MCF 10A (cell line): ENCODE measurements at regions of chr6 and their contacts with region 1.

Region 1: GRCh38 chr6:139375232-139376016 is 976 bp upstream of the CITED2 start:
- DNase-seq: peak; percentile 98
- H3K4me3 Mint-ChIP-seq: peak overlapping the region; percentile 97
- H3K27ac Mint-ChIP-seq: peak overlapping the region; percentile 97
- H3K4me1 Mint-ChIP-seq: peaks cover 33% of the 10 kb centered on the region
- H3K27me3 Mint-ChIP-seq: no peaks in the 10 kb centered on the region
- CTCF ChIP-seq: no peak

Region 2: DNA sequence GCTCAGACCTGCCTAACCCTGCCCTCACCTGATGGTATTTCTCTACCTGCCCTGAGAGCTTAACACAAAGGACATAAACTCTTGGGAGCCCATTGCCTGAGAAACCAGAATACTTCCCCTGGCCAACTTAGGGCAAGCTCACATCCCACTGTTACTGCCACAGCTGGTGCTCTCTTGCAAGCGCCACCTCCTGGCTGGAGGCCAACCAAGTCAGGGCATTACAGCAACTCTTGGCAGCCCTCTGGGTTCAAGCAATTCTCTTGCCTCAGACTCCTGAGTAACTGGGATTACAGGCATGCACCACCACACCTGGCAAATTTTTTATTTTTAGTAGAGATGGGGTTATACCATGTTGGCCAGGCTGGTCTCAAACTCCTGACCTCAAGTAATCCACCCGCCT is 170.4 kb before region 1 on chr6:
- CTCF ChIA-PET with region 1: no interaction called
- POLR2A ChIA-PET with region 1: no interaction called
- intact Hi-C with region 1: no loop called
- DNase-seq: peak; percentile 27
- H3K4me3 Mint-ChIP-seq: no peak overlapping the region
- H3K27ac Mint-ChIP-seq: no peak overlapping the region
- H3K4me1 Mint-ChIP-seq: no peaks in the 10 kb centered on the region
- H3K27me3 Mint-ChIP-seq: no peaks in the 10 kb centered on the region
- CTCF ChIP-seq: no peak

Region 3: DNA sequence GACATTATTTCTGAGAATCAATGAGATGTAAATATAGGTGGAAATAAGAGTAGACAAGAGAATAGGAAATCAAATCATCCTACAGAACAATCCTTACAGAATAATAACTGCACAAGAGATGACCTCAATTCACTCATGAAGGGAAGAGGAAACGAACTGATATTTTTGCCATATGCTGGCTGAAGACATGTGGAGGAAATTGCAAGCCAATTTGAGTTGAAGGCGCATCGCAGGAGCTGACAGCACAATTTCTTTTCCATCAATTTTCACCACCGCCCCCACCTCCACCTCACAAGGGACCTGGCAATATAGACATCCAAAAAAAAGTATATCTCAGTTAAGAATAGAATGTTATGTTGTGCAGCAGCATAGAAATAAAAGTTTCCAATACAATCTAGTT is 21.2 kb before region 1 on chr6:
- CTCF ChIA-PET with region 1: no interaction called
- POLR2A ChIA-PET with region 1: no interaction called
- intact Hi-C with region 1: no loop called
- DNase-seq: no peak
- H3K4me3 Mint-ChIP-seq: no peak overlapping the region
- H3K27ac Mint-ChIP-seq: no peak overlapping the region
- H3K4me1 Mint-ChIP-seq: no peaks in the 10 kb centered on the region
- H3K27me3 Mint-ChIP-seq: no peaks in the 10 kb centered on the region
- CTCF ChIP-seq: no peak

Region 4: DNA sequence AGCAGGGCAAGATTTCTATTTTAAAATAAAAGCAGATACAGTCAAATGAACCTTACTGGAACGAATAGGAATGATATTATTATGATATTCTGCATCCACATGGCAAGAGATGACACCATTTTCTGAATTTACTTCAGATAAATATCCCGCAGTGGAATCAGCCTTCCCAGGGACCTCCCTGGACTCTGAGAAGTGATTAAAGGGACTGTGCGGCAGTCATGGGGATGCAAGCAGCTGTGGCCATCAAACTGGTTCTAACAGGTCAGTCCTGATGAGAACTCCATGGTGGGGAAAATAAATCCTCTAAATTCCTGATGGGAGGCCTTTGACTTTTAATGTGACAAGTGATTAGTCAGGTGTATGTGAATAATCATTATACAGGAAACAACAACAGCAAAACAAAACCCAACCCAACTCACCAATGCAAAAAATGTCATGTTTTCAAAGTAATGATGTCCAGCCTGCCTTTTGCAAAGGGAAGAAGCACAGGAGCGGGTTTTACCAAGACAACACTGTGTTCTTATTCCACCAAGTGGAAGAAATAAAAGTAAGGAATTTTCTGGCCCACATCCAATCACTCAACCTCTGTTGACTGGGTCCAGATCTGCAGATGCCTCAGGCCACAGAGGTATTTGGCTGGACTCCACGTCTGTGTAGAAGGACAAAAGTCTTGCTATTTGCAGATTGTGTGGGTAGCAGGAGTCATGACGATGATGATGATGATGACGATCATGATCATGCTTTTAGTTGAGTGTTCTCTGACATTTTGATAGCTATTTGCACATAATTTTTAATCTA is 61.0 kb after region 1 on chr6:
- CTCF ChIA-PET with region 1: interaction called, 4 read pairs
- POLR2A ChIA-PET with region 1: interaction called, 22 read pairs
- intact Hi-C with region 1: no loop called
- DNase-seq: peak; percentile 83
- H3K4me3 Mint-ChIP-seq: no peak overlapping the region
- H3K27ac Mint-ChIP-seq: peak overlapping the region; percentile 69
- H3K4me1 Mint-ChIP-seq: peaks cover 24% of the 10 kb centered on the region
- H3K27me3 Mint-ChIP-seq: no peaks in the 10 kb centered on the region
- CTCF ChIP-seq: no peak

Region 5: DNA sequence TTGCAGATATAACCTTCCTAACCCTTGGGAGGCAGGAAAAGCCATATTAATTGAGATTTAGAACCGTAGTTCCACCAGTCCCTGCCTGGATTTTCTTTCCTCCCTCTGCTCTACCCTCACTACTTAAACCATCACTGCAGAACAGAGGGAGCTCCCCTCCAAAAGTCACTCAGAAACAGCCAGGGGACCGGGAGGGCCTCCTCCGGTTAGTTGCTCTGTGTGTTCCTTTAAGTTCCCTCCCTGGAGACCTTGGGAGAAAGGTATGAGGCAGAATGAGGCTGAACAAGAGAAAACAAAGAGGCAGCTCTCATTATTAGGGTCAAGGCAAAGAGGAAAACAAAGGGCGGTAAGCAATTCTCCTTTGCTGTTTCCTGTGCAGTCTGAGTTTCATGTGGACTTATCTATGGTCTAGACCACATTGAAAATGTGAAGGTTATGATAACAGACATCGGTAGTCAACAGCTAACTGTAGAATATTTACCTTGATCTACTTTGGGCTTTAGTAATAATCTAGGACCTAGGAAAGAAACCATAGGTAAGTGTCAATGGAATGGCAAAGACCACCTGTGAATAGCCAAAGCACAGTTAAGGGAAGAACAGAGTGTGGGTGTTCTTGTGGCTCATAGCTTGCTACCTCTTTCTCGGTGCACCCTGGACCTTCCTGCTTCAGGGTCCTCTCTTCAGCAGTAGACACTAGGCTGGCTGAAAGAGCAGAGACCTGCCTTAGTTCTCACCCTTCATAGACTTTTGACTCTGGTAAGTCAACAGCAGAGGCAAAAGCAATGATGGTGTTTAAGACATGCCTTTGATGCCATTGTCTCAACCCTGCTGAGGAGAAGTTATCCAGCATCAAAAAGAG is 249.9 kb after region 1 on chr6:
- CTCF ChIA-PET with region 1: no interaction called
- POLR2A ChIA-PET with region 1: no interaction called
- intact Hi-C with region 1: no loop called
- DNase-seq: no peak
- H3K4me3 Mint-ChIP-seq: no peak overlapping the region
- H3K27ac Mint-ChIP-seq: no peak overlapping the region
- H3K4me1 Mint-ChIP-seq: peaks cover 8% of the 10 kb centered on the region
- H3K27me3 Mint-ChIP-seq: no peaks in the 10 kb centered on the region
- CTCF ChIP-seq: no peak

Region 6: GRCh38 chr6:139635401-139636152 is 260.2 kb after region 1 on chr6:
- CTCF ChIA-PET with region 1: no interaction called
- POLR2A ChIA-PET with region 1: interaction called, 10 read pairs
- intact Hi-C with region 1: no loop called
- DNase-seq: peak; percentile 26
- H3K4me3 Mint-ChIP-seq: no peak overlapping the region
- H3K27ac Mint-ChIP-seq: no peak overlapping the region
- H3K4me1 Mint-ChIP-seq: no peaks in the 10 kb centered on the region
- H3K27me3 Mint-ChIP-seq: no peaks in the 10 kb centered on the region
- CTCF ChIP-seq: no peak

Region 7: DNA sequence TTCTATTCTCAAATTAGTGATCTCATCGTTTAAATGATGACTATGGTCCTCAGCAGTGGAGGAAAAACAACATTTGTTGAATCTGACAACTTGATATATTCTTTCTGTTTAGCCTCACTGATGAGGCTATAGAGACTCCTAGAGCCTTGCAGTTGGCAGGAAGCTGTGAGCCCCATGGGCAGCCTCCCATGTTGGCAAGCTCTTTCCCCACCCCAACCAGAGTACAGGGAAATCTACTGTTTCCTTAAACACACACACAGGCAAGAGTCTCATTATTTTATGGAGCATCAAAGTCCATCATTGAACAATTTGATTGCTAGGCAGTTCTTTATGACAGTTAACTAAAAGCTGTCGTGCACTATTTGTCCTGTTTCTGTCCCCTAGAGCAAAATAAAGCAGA is 497.2 kb after region 1 on chr6:
- CTCF ChIA-PET with region 1: no interaction called
- POLR2A ChIA-PET with region 1: interaction called, 15 read pairs
- intact Hi-C with region 1: no loop called
- DNase-seq: no peak
- H3K4me3 Mint-ChIP-seq: no peak overlapping the region
- H3K27ac Mint-ChIP-seq: no peak overlapping the region
- H3K4me1 Mint-ChIP-seq: no peaks in the 10 kb centered on the region
- H3K27me3 Mint-ChIP-seq: no peaks in the 10 kb centered on the region
- CTCF ChIP-seq: no peak

Region 8: DNA sequence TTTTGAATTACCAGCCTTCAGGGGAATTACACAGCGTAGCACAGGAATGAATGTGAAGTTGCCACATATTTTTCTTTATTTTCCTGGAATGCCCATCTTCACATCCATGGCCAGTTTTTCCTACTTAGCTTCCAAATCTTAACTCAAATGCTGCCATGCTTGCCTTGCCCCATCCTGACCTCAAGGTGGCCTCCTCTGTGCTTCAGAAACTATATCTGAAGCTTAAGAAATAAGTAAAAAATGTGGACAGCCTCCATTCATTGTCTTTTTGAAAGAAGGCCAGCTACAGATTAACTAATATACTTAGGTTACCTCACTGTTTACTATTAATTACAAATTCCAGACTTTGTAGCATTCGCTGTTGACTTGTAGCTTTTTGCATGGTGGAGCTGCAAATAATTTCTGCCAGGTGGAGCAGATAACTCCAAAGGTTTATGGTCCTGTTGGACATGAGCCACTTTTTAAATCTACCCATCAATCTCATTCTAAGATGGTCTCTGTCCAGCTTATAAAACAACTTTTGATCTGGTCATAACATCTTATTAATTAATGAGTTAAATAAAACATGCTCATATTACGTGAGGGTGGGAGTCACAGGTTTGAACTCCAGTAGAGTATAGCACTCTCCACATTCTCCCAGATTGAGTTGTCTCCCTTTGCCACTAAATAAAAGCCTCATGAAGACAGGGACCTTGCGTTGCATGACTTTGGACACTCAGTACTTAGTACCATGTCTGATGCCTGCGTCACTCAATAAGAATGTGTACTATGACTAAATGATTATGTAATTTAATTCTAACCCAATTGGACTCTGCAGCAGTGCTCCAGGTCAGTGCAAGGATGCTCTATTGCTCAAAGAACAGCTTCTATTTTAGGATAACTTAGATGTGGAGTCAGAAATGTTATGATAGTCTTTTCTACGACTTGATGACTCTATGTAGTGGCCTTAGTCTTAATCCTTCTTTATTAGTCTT is 677.6 kb after region 1 on chr6:
- CTCF ChIA-PET with region 1: no interaction called
- POLR2A ChIA-PET with region 1: interaction called, 13 read pairs
- intact Hi-C with region 1: loop called (anchors 2 kb)
- DNase-seq: no peak
- H3K4me3 Mint-ChIP-seq: no peak overlapping the region
- H3K27ac Mint-ChIP-seq: peak overlapping the region; percentile 74
- H3K4me1 Mint-ChIP-seq: peaks cover 22% of the 10 kb centered on the region
- H3K27me3 Mint-ChIP-seq: no peaks in the 10 kb centered on the region
- CTCF ChIP-seq: peak; percentile 10

Region 9: GRCh38 chr6:140441256-140441655 is 1065.8 kb after region 1 on chr6:
- CTCF ChIA-PET with region 1: interaction called, 6 read pairs
- POLR2A ChIA-PET with region 1: interaction called, 23 read pairs
- intact Hi-C with region 1: loop called (anchors 1 kb)
- DNase-seq: peak; percentile 40
- H3K4me3 Mint-ChIP-seq: no peak overlapping the region
- H3K27ac Mint-ChIP-seq: no peak overlapping the region
- H3K4me1 Mint-ChIP-seq: peaks cover 19% of the 10 kb centered on the region
- H3K27me3 Mint-ChIP-seq: no peaks in the 10 kb centered on the region
- CTCF ChIP-seq: peak; percentile 45

Region 10: DNA sequence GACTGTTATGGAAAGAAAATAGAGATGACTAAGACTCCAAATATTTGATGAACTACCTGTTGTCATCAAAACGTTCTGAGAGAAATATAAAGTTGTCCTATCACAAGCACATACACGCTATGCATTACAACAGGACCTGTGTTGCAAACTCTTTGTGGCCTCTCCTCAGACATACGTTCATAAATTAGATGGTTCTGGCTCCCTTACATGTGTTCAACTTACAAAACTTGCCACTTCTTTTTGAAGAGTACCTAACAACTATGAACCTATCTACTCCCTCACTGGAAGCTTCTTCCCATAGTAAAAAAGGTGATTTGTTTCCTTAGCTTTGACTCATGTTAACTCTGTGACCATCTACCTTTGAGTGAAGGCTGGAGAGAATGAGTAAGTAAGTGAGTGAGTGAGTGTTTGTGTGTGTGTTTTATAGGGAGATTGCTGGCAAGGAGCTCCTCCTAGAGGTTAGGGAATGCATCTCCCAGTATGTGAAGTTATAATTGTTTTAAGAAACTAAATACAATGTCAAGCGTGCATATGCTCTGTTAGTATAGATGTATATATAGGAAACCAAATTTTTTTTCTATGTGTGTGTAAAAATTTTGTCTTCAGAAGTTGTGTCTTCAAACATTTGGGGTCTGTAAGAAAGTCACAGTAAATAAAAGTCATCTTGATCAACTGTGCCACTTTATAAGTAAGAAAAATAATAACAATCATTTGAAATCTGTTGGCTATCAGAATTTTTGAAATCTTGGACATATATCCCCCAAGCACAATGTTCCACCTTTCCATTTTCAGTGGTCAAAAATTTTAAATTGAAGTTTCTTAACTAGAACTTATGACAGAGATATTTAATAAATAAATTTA is 1546.2 kb after region 1 on chr6:
- CTCF ChIA-PET with region 1: no interaction called
- POLR2A ChIA-PET with region 1: interaction called, 10 read pairs
- intact Hi-C with region 1: loop called (anchors 1 kb)
- DNase-seq: peak; percentile 85
- H3K4me3 Mint-ChIP-seq: no peak overlapping the region
- H3K27ac Mint-ChIP-seq: peak overlapping the region; percentile 66
- H3K4me1 Mint-ChIP-seq: peaks cover 6% of the 10 kb centered on the region
- H3K27me3 Mint-ChIP-seq: no peaks in the 10 kb centered on the region
- CTCF ChIP-seq: peak; percentile 82